Activated CD8-positive, alpha-beta T cell treated with anti-CD3 and anti-CD28 coated beads for 36 hours (primary cell): ENCODE measurements at regions of chr1 and their contacts with region 1.

Region 1: DNA sequence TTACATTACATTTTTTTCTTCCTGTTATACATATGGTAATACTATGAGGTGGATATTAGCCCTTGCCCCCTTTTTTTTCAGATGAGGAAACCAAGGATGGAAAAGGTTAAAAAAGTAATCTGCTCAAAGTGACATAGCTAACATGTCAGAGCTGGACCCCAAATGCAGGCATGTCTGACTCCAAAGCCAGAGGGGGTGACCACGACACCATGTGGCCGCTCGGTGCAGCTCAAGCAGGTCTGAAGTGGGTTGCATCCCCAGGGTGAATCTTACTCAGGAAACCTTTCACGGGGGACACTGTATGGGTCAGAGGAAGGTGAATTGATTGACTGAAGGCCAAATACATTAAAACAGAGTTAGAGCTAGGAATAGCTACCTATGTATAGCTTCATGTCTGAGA is 34.8 kb downstream of the CD34 start:
- DNase-seq: peak; percentile 55
- ATAC-seq: no peak
- H3K4me3 Mint-ChIP-seq: no peak overlapping the region
- H3K27ac Mint-ChIP-seq: no peak overlapping the region
- H3K4me1 Mint-ChIP-seq: peaks cover 46% of the 10 kb centered on the region
- H3K27me3 Mint-ChIP-seq: no peaks in the 10 kb centered on the region
- CTCF ChIP-seq: no peak

Region 2: GRCh38 chr1:207828485-207829158 is 47.5 kb before region 1 on chr1:
- CTCF ChIA-PET with region 1: interaction called, 387 read pairs
- POLR2A ChIA-PET with region 1: interaction called, 14 read pairs
- intact Hi-C with region 1: loop called (anchors 1 kb)
- DNase-seq: peak; percentile 73
- ATAC-seq: no peak
- H3K4me3 Mint-ChIP-seq: no peak overlapping the region
- H3K27ac Mint-ChIP-seq: peak overlapping the region; percentile 73
- H3K4me1 Mint-ChIP-seq: peaks cover 96% of the 10 kb centered on the region
- H3K27me3 Mint-ChIP-seq: no peaks in the 10 kb centered on the region
- CTCF ChIP-seq: peak; percentile 71